Calu3 (cell line): ENCODE measurements at regions of chr17 and their contacts with region 1.

Region 1: GRCh38 chr17:17313350-17313991 is 10.3 kb downstream of the NT5M start:
- DNase-seq: peak; percentile 72
- H3K4me3 Mint-ChIP-seq: no peak overlapping the region
- H3K27ac Mint-ChIP-seq: no peak overlapping the region
- H3K4me1 Mint-ChIP-seq: no peaks in the 10 kb centered on the region
- H3K27me3 Mint-ChIP-seq: no peaks in the 10 kb centered on the region
- CTCF ChIP-seq: no peak

Region 2: DNA sequence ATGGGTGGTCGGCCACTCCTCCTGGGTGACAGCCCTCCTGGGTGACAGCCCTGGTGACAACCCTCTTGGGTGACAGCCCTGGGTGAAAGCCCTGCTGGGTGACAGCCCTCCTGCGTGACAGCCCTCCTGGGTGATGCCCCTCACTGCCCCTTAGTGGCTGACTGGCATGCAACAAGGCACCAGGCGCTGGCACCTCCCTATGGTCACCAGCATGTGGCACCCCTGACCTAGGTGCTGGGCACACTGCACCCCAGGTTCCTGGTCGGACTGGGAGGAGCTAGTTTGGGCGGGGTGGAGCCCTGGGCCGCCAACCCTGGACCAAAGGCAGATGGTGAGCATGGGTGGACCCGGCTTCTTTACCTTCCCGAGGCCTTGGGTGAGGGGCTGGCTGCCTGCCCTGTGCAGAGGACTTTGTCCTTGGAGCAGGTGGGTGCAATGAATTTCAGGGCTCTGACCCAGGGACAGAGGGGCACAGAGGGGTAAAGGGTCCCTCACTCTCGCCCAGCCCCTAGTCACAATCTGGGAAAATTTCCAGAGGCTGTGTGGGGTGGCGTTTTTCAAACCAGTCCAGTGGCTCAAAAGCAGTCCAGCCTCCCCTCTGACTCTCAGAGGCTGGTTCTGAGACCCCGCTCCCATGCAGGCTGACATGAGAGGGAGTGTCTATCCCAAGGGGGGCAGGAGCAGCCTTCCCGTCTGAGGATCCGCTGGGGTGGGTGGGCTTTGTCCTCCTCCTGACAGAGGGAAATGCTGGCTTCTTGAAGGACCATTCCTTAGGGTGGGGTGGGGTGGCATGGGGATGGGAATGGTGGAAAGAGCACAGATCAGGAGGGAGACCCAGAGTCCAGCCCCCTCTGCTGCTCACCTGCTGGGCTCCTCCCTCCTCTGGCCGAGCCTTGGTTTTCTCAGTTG is 315.7 kb before region 1 on chr17:
- CTCF ChIA-PET with region 1: interaction called, 4 read pairs
- intact Hi-C with region 1: loop called (anchors 5 kb)
- DNase-seq: peak; percentile 91
- H3K4me3 Mint-ChIP-seq: no peak overlapping the region
- H3K27ac Mint-ChIP-seq: no peak overlapping the region
- H3K4me1 Mint-ChIP-seq: no peaks in the 10 kb centered on the region
- H3K27me3 Mint-ChIP-seq: no peaks in the 10 kb centered on the region
- CTCF ChIP-seq: peak; percentile 95

Region 3: GRCh38 chr17:17269926-17270773 is 43.3 kb before region 1 on chr17:
- CTCF ChIA-PET with region 1: no interaction called
- intact Hi-C with region 1: no loop called
- DNase-seq: peak; percentile 7
- H3K4me3 Mint-ChIP-seq: no peak overlapping the region
- H3K27ac Mint-ChIP-seq: no peak overlapping the region
- H3K4me1 Mint-ChIP-seq: no peaks in the 10 kb centered on the region
- H3K27me3 Mint-ChIP-seq: no peaks in the 10 kb centered on the region
- CTCF ChIP-seq: no peak